Caco-2 (cell line): ENCODE measurements at regions of chr7 and their contacts with region 1.

Region 1: GRCh38 chr7:140175221-140176121 is 1.3 kb downstream of the KDM7A start:
- DNase-seq: peak; percentile 84 to 90
- H3K4me3 ChIP-seq: peak overlapping the region; percentile 83
- H3K4me3 Mint-ChIP-seq: peak overlapping the region; percentile 81
- H3K27ac Mint-ChIP-seq: peak overlapping the region; percentile 25
- H3K4me1 ChIP-seq: no peaks in the 10 kb centered on the region
- H3K4me1 Mint-ChIP-seq: peaks cover 13% of the 10 kb centered on the region
- H3K27me3 ChIP-seq: no peaks in the 10 kb centered on the region
- H3K27me3 Mint-ChIP-seq: peaks cover 6% of the 10 kb centered on the region
- CTCF ChIP-seq: peak; percentile 74 to 88

Region 2: DNA sequence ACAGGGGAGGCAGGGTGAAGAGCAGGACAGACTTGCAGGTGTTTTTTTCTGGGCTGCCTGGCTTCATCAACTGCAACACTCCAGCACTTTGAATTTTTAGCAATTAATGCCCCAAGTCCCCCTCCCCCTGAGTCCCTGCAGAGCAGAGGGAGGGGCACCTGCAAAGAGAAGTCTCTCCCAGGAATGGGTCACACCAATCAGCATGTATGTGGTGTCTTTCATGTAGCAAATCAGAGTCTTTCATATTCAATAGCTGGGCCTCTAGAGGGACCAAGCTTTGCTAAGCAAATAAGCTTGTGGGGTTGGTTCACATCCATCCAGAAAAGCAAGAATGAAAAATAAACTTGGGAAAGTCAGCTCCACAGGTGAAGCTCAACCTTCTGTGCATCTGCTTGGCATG is 203.4 kb before region 1 on chr7:
- CTCF ChIA-PET with region 1: no interaction called
- POLR2A ChIA-PET with region 1: no interaction called
- intact Hi-C with region 1: no loop called
- DNase-seq: no peak
- H3K4me3 ChIP-seq: no peak overlapping the region
- H3K4me3 Mint-ChIP-seq: no peak overlapping the region
- H3K27ac Mint-ChIP-seq: no peak overlapping the region
- H3K4me1 ChIP-seq: no peaks in the 10 kb centered on the region
- H3K4me1 Mint-ChIP-seq: no peaks in the 10 kb centered on the region
- H3K27me3 ChIP-seq: no peaks in the 10 kb centered on the region; the same call in 1 of the 2 replicates
- H3K27me3 Mint-ChIP-seq: peaks cover 17% of the 10 kb centered on the region
- CTCF ChIP-seq: no peak

Region 3: GRCh38 chr7:140230861-140231770 is 55.6 kb after region 1 on chr7:
- CTCF ChIA-PET with region 1: no interaction called
- POLR2A ChIA-PET with region 1: no interaction called
- intact Hi-C with region 1: loop called (anchors 5 kb)
- DNase-seq: peak; percentile 55 to 61
- H3K4me3 ChIP-seq: peak overlapping the region; percentile 44
- H3K4me3 Mint-ChIP-seq: peak overlapping the region; percentile 92
- H3K27ac Mint-ChIP-seq: no peak overlapping the region
- H3K4me1 ChIP-seq: no peaks in the 10 kb centered on the region
- H3K4me1 Mint-ChIP-seq: peaks cover 19% of the 10 kb centered on the region
- H3K27me3 ChIP-seq: no peaks in the 10 kb centered on the region
- H3K27me3 Mint-ChIP-seq: peaks cover 10% of the 10 kb centered on the region
- CTCF ChIP-seq: peak in 1 of 2 experiments; percentile 32

Region 4: GRCh38 chr7:140326116-140326928 is 150.9 kb after region 1 on chr7:
- CTCF ChIA-PET with region 1: interaction called, 5 read pairs
- POLR2A ChIA-PET with region 1: interaction called, 4 read pairs
- intact Hi-C with region 1: loop called (anchors 1 kb)
- DNase-seq: peak; percentile 56 to 70
- H3K4me3 ChIP-seq: no peak overlapping the region
- H3K4me3 Mint-ChIP-seq: no peak overlapping the region
- H3K27ac Mint-ChIP-seq: no peak overlapping the region
- H3K4me1 ChIP-seq: 0 out of 2 replicates have a peak, but pooled peaks cover 4% of the 10 kb centered on the region
- H3K4me1 Mint-ChIP-seq: no peaks in the 10 kb centered on the region
- H3K27me3 ChIP-seq: no peaks in the 10 kb centered on the region
- H3K27me3 Mint-ChIP-seq: no peaks in the 10 kb centered on the region
- CTCF ChIP-seq: peak; percentile 64 to 86

Region 5: DNA sequence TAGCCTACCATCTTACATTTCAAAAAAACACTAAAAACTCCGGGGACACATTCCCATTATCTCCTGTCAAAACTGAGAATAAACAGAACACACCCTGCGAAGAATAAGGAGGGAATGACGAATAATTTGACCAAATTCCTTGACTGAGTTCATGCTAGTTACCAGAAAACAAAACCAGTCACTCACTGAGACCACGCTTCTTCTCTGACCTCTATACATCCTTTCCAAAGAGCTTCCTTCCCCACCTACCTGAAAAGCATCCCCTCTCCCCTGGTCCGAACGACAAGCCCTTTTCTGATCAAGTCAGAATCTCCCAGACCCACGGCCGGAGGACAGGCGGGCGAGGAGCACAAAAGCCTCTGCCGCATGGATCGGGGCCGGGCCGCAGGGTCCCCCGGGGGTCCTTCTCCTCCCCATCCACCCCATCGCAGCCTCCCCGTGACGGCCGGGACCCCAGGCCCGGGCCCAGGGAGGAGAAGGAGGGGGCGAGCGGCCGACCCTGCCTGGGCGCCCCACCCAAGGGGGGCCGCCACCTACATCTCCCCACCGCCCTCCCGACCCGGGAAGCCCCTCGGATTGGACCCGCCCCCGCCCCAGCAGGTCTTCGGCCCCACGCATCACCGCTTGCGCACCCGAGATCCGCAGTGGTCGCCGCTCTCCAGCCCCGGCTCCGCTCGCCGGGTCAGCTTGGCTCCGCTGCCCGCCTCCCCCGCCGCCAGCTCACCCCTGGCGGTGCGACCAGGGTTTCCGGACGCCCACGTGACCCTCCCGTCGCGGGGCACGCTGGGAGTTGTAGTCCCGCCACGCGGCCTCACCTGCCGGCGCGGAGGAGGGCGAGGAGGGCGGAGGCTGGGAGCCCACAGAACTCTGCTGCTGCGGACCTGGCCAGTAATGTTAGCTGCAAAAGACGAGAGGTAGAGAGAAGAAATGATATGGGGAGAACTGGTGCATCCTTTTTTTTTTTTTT is 222.6 kb after region 1 on chr7 and contains the start of gene SLC37A3:
- CTCF ChIA-PET with region 1: no interaction called
- POLR2A ChIA-PET with region 1: no interaction called
- intact Hi-C with region 1: loop called (anchors 5 kb)
- DNase-seq: peak; percentile 89 to 94
- H3K4me3 ChIP-seq: peak within 1 kb of the TSS; percentile 98
- H3K4me3 Mint-ChIP-seq: peak within 1 kb of the TSS; percentile 91
- H3K27ac Mint-ChIP-seq: peak within 1 kb of the TSS; percentile 83
- H3K4me1 ChIP-seq: no peaks in the 10 kb centered on the region
- H3K4me1 Mint-ChIP-seq: no peaks in the 10 kb centered on the region
- H3K27me3 ChIP-seq: no peaks in the 10 kb centered on the region
- H3K27me3 Mint-ChIP-seq: no peaks in the 10 kb centered on the region
- CTCF ChIP-seq: no peak
- total RNA-seq, gene SLC37A3: 40.6 and 46.4 TPM in 2 replicates

Region 6: DNA sequence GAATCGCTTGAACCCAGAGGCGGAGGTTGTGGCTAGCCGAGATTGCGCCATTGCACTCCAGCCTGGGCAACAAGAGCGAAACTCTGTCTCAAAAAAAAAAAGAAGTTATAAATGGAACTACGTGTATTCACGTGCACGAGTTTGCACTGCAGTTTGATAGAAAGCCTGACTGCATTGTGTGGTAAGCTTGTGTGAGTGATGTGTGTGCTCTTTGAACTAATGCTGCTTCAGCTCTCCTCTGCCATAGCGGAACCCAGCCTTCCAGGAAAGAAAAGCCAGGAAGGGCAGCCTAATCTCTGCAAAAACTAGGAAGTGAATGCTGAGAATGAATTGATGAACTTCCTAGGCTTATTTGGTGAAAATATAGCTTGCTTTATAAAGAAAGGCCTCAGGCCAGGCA is 319.4 kb after region 1 on chr7:
- CTCF ChIA-PET with region 1: no interaction called
- POLR2A ChIA-PET with region 1: no interaction called
- intact Hi-C with region 1: loop called (anchors 5 kb)
- DNase-seq: no peak
- H3K4me3 ChIP-seq: no peak overlapping the region
- H3K4me3 Mint-ChIP-seq: no peak overlapping the region
- H3K27ac Mint-ChIP-seq: no peak overlapping the region
- H3K4me1 ChIP-seq: no peaks in the 10 kb centered on the region
- H3K4me1 Mint-ChIP-seq: no peaks in the 10 kb centered on the region
- H3K27me3 ChIP-seq: no peaks in the 10 kb centered on the region
- H3K27me3 Mint-ChIP-seq: no peaks in the 10 kb centered on the region
- CTCF ChIP-seq: no peak